ENCODE measurements at regions of chr12 and their contacts with region 1.

Region 1: GRCh38 chr12:47819896-47820630 is at the start of gene HDAC7:
- DNase-seq: peak; percentile 94
- ATAC-seq: peak; percentile 69 to 83 (median 74)
- H3K4me3 ChIP-seq: peak within 1 kb of the TSS; percentile 65 to 98 (median 80)
- H3K27ac ChIP-seq: peak within 1 kb of the TSS; percentile 94 to 99 (median 98)
- H3K4me1 ChIP-seq: peaks cover 13 to 87% (median 74%) of the 10 kb centered on the region in 12 donors
- H3K27me3 ChIP-seq: no peaks in the 10 kb centered on the region
- CTCF ChIP-seq: peak in 1 of 12 donors; percentile 10
- POLR2A ChIP-seq: peak in 1 of 2 donors; percentile 69
- total RNA-seq, gene HDAC7: 27.4 to 63.0 (median 38.6) TPM

Region 2: DNA sequence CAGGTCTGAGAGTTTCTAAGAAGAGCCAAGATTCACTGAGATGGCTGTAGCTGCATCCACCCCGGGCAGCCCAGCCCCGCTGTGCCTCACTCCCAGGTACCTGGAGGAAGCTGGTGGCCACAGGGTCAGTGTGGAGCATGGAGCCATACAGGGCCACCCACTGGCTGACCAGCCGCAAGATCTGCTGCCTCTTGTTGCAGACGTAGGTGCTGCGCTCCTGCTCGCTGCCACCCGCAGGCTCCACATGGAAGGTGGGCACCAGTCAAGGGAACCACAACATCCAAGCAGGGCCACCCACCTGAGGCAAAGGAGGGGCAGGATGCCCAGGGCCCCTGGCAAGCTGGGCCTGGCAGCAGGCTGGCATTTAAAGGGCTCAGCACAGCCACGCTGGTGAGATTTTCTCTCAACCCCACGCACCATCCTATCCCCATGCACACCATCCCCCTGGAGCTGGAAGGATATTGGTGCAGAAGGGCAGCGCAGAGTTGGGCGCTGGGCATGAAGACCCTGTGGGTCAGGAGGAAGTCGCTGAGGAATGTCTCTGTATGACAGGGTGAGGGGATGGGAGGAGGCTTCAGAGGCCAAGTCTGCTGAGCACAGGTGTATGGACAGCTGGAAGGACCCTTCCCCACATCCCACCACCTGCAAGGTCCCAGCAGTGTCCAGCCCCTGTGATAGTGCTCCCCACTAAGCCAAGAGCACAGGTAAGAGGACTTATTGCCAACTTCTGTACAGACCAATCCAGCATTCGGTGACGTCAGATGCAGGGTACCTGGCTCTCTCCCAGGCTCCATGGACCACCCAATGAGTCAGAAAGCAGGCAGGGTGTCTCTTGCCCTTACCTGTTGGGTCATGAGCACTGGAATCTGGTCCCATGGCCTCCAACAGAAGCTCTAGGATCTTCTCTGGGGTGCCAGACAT is 72.2 kb before region 1 on chr12:
- intact Hi-C with region 1: loop called in 1 of 10 experiments (anchors 2 kb)
- DNase-seq: peak in 1 of 5 donors; percentile 39
- ATAC-seq: no peak
- H3K4me3 ChIP-seq: no peak overlapping the region
- H3K27ac ChIP-seq: no peak overlapping the region
- H3K4me1 ChIP-seq: peaks cover 4 to 41% (median 18%) of the 10 kb centered on the region in 12 donors
- H3K27me3 ChIP-seq: no peaks in the 10 kb centered on the region
- CTCF ChIP-seq: no peak
- POLR2A ChIP-seq: no peak

Region 3: DNA sequence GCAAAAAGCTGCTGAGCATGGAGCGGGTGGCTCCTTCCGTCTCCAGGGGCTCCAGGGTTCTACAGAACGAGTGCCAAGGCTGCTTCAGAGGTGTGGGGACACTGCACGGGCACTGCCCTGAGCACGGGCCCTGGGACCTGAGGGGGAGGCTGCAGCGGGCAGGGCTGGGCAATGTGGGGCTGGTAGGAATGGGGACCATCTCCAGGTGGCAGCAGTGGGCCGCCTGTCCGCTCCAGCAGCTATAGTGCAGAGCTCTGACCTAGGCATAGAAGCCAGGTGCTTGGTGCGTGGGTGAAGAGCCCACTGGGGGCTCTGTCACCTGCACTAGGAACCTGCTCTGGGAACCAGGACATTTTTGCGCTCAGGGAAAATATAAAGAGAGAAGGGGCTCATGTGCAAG is 22.6 kb before region 1 on chr12:
- intact Hi-C with region 1: loop called in 1 of 10 experiments (anchors 1 kb)
- DNase-seq: no peak
- ATAC-seq: peak in 2 of 4 donors; percentile 12 to 46
- H3K4me3 ChIP-seq: no peak overlapping the region
- H3K27ac ChIP-seq: peak overlapping the region in 1 of 12 donors; percentile 7
- H3K4me1 ChIP-seq: peaks cover 22 to 47% (median 42%) of the 10 kb centered on the region in 12 donors
- H3K27me3 ChIP-seq: no peaks in the 10 kb centered on the region
- CTCF ChIP-seq: peak in 11 of 12 donors; percentile 17 to 56 (median 38)
- POLR2A ChIP-seq: no peak

Region 4: DNA sequence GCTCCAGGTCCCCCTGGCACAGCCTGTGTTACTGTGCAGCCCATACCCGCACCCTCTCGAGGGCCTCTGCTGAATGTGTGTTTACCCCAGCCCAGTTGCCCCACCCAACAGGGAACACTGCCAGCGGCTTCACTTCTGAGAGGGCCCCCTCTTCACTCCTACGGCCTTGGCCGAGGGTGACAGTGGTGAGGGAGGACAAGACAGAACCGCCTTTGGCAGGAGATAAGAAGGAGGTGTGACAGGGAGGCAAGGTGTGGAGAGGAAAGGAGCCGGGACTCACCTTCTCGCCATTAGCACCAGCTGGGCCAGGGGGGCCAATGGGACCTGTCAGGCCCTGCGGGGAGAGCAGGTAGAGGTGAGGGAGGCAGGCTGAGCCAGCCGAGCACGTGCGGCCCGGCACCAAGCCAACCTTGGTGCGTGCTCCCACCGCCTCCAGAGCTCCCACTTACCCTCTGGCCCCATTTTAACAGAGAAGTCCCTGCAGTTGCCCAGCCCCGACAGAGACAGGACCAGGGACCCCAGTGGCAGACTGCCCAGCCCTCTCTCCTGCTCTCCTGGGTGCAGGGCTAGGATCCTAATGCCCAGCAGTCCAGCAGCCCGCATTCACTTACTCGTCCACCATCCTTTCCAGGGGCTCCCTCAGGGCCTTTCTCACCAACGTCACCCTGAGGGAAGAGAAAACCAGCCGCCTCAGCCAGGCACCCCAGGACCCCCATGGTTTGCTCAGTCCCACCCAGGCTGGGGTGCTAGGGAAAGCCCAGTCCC is 161.6 kb after region 1 on chr12:
- intact Hi-C with region 1: no loop called
- DNase-seq: no peak
- ATAC-seq: no peak
- H3K4me3 ChIP-seq: no peak overlapping the region
- H3K27ac ChIP-seq: no peak overlapping the region
- H3K4me1 ChIP-seq: no peaks in the 10 kb centered on the region
- H3K27me3 ChIP-seq: no peaks in the 10 kb centered on the region
- CTCF ChIP-seq: no peak
- POLR2A ChIP-seq: no peak

Measured in heart left ventricle (tissue), 16 donors.